Caco-2 (cell line): ENCODE measurements at regions of chr12 and their contacts with region 1.

Region 1: GRCh38 chr12:64890873-64891468 is 66.5 kb downstream of the TBC1D30 start:
- DNase-seq: peak in 1 of 2 experiments; percentile 65
- H3K4me3 ChIP-seq: peak overlapping the region; percentile 18
- H3K4me3 Mint-ChIP-seq: peak overlapping the region; percentile 73
- H3K27ac Mint-ChIP-seq: peak overlapping the region; percentile 82
- H3K4me1 ChIP-seq: peaks cover 45% of the 10 kb centered on the region
- H3K4me1 Mint-ChIP-seq: peaks cover 28% of the 10 kb centered on the region
- H3K27me3 ChIP-seq: no peaks in the 10 kb centered on the region
- H3K27me3 Mint-ChIP-seq: no peaks in the 10 kb centered on the region
- CTCF ChIP-seq: peak; percentile 53 to 81

Region 2: DNA sequence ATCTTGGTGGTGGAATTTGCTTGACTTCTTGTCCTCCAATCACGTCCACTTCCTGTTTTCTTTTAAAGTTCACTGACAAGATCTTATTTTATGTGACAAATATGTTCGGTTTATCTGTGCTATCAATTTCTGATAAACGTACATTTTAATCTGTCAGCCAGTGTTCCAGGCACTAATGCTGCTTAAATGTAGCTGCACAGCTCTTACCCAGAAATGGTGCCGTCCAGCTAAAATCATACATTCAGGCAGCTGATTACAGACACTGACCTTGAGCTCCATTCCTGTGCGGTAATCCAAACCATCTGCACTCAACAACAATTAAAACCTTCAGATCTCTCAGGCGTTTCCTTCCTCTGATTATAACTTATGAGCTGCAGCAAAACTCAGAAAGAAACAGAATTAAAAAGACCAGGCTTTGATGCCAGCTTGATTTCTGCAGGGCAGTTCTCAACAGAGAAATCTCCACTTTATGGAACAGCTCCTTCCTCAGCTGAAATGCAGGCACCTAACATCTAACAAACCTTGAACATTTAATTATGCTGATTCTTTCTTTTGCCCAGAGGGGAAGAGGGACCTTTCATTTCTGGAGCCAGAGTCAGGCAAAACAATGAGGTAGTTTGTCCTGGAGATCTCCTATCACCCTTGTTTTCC is 307.1 kb before region 1 on chr12:
- CTCF ChIA-PET with region 1: no interaction called
- POLR2A ChIA-PET with region 1: no interaction called
- intact Hi-C with region 1: no loop called
- DNase-seq: no peak
- H3K4me3 ChIP-seq: no peak overlapping the region
- H3K4me3 Mint-ChIP-seq: no peak overlapping the region
- H3K27ac Mint-ChIP-seq: no peak overlapping the region
- H3K4me1 ChIP-seq: no peaks in the 10 kb centered on the region
- H3K4me1 Mint-ChIP-seq: peaks cover 6% of the 10 kb centered on the region
- H3K27me3 ChIP-seq: no peaks in the 10 kb centered on the region
- H3K27me3 Mint-ChIP-seq: no peaks in the 10 kb centered on the region
- CTCF ChIP-seq: no peak

Region 3: GRCh38 chr12:64801381-64801780 is 89.6 kb before region 1 on chr12:
- CTCF ChIA-PET with region 1: interaction called, 28 read pairs
- POLR2A ChIA-PET with region 1: no interaction called
- intact Hi-C with region 1: loop called (anchors 1 kb)
- DNase-seq: no peak
- H3K4me3 ChIP-seq: no peak overlapping the region
- H3K4me3 Mint-ChIP-seq: no peak overlapping the region
- H3K27ac Mint-ChIP-seq: no peak overlapping the region
- H3K4me1 ChIP-seq: peaks cover 28% of the 10 kb centered on the region
- H3K4me1 Mint-ChIP-seq: peaks cover 25% of the 10 kb centered on the region
- H3K27me3 ChIP-seq: no peaks in the 10 kb centered on the region
- H3K27me3 Mint-ChIP-seq: no peaks in the 10 kb centered on the region
- CTCF ChIP-seq: peak; percentile 9 to 38

Region 4: DNA sequence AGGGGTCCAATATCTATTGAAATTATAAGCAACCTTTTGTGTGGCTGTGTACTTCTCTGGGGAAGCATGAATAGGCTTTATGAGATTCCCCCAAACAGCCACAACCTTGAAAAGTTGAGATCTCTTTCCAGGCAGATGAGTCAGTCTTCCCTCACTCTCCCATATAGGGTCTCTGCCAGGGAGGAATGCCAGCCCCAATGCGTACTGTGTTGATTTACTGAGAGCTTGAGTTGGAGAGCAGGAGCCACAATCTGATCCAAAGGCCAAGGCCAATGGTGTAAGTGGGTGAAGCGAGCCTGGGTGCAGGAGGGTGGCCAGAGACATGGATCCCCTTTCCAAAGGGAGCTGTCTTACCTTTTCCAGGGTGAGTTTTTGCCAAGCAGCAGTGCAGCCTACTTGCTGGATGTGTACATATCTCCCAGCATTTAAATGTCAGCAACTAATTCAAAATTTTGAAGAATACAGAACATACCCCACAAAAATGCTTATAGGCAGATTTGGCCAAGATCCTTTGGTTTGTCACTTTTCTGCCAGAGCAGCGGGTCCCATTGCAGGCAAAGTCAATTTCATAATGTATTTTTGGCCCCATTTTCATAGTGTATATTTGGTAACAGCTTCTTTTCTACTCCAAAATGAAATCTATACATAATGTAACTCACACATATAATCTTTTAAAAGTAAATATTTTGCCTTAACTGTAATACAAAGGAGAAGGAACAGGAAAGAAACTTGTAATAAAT is 21.7 kb after region 1 on chr12:
- CTCF ChIA-PET with region 1: no interaction called
- POLR2A ChIA-PET with region 1: no interaction called
- intact Hi-C with region 1: no loop called
- DNase-seq: no peak
- H3K4me3 ChIP-seq: no peak overlapping the region
- H3K4me3 Mint-ChIP-seq: no peak overlapping the region
- H3K27ac Mint-ChIP-seq: no peak overlapping the region
- H3K4me1 ChIP-seq: peaks cover 15% of the 10 kb centered on the region; the same call in 1 of the 2 replicates
- H3K4me1 Mint-ChIP-seq: no peaks in the 10 kb centered on the region
- H3K27me3 ChIP-seq: no peaks in the 10 kb centered on the region
- H3K27me3 Mint-ChIP-seq: no peaks in the 10 kb centered on the region
- CTCF ChIP-seq: no peak

Region 5: DNA sequence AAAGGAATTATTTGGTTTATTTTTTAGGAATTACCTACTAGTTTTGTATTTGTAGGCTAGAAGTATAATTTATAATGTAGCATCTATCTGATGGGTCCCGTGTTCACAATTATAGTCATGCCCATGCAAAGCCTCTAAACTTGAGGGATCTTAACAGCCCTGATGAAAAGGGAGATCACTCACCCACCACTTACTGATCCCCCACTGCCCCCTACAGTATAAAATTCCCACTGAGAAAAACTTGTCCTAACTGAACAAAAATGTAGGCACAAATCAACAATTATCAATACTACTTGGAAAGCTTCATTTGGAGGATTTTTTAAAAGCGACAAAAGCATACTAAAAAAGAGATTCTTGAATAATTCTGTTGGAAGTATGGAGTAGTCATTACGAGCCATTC is 209.2 kb after region 1 on chr12:
- CTCF ChIA-PET with region 1: interaction called, 3 read pairs
- POLR2A ChIA-PET with region 1: no interaction called
- intact Hi-C with region 1: loop called (anchors 1 kb)
- DNase-seq: peak in 1 of 2 experiments; percentile 52
- H3K4me3 ChIP-seq: no peak overlapping the region
- H3K4me3 Mint-ChIP-seq: no peak overlapping the region
- H3K27ac Mint-ChIP-seq: no peak overlapping the region
- H3K4me1 ChIP-seq: no peaks in the 10 kb centered on the region
- H3K4me1 Mint-ChIP-seq: no peaks in the 10 kb centered on the region
- H3K27me3 ChIP-seq: no peaks in the 10 kb centered on the region
- H3K27me3 Mint-ChIP-seq: no peaks in the 10 kb centered on the region
- CTCF ChIP-seq: peak; percentile 44 to 49

Region 6: DNA sequence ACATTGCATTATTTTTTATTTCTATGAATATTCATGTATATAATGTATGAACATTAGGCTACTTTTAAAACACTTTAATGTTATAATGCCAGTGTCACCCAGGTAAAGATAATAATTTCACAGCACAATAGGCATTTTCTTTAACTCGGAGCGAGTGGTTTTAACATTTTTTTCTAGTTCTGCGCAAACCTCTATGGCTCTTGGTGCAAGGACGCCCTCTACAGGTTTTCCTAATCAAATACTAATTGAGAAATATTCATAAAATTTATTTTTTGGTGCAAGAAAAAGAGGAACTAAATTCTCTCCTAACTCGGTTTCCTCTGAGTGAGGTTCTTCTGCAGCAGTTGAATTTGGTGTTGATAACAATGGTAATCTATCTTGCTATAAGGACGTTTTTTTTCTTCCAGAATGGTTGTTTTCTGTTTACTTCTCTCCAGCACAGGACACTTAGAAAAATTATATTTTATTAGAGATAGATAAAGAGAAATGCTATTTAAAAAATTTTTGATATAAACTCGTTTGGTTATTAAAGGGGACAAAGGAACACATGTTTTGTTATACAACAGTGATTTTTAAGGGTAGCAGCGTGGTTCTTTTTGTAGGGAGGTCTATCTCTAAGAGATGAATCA is 232.6 kb after region 1 on chr12:
- CTCF ChIA-PET with region 1: interaction called, 7 read pairs
- POLR2A ChIA-PET with region 1: no interaction called
- intact Hi-C with region 1: loop called (anchors 1 kb)
- DNase-seq: peak in 1 of 2 experiments; percentile 53
- H3K4me3 ChIP-seq: no peak overlapping the region
- H3K4me3 Mint-ChIP-seq: no peak overlapping the region
- H3K27ac Mint-ChIP-seq: no peak overlapping the region
- H3K4me1 ChIP-seq: no peaks in the 10 kb centered on the region
- H3K4me1 Mint-ChIP-seq: no peaks in the 10 kb centered on the region
- H3K27me3 ChIP-seq: no peaks in the 10 kb centered on the region
- H3K27me3 Mint-ChIP-seq: no peaks in the 10 kb centered on the region
- CTCF ChIP-seq: peak; percentile 62 to 68

Region 7: DNA sequence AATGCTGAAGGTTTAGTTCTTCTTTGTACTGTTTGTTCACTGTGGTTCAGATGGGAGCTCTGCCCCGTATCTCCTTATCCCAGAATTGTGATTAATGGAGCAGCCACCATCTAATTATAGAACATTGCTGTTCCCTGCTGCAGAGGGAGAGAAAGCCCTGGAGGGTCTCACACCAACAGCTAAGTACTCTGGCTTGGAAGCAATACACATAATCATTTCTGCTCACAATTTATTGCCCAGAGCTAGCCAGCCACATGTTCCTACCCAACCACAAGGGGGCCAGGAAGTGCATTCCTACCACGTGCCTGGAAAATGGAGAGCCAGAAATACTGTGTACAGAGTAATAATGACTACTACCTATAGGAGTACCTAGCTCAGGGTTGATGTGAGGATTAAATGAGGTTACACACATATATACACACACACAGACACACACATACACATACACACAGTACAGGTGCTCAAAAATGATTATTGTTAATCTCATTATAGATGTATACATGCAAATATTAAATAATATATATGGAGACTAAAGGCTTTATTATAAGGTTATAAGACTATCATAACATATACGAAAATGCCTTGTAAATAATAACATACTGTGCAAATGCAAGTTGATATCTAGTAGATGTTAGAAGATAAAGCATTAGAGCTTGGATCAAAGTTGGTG is 409.8 kb after region 1 on chr12:
- CTCF ChIA-PET with region 1: no interaction called
- POLR2A ChIA-PET with region 1: no interaction called
- intact Hi-C with region 1: loop called (anchors 5 kb)
- DNase-seq: peak; percentile 60 to 63
- H3K4me3 ChIP-seq: no peak overlapping the region
- H3K4me3 Mint-ChIP-seq: no peak overlapping the region
- H3K27ac Mint-ChIP-seq: no peak overlapping the region
- H3K4me1 ChIP-seq: no peaks in the 10 kb centered on the region
- H3K4me1 Mint-ChIP-seq: no peaks in the 10 kb centered on the region
- H3K27me3 ChIP-seq: no peaks in the 10 kb centered on the region
- H3K27me3 Mint-ChIP-seq: no peaks in the 10 kb centered on the region
- CTCF ChIP-seq: peak; percentile 48 to 55